Right cardiac atrium (tissue), 5 donors: ENCODE measurements at regions of chr13 and their contacts with region 1.

Region 1: GRCh38 chr13:23554000-23554399 is 16.2 kb upstream of the TNFRSF19 start:
- DNase-seq: no peak
- ATAC-seq: no peak
- H3K4me3 ChIP-seq: no peak overlapping the region
- H3K27ac ChIP-seq: no peak overlapping the region
- H3K4me1 ChIP-seq: peaks cover 8% of the 10 kb centered on the region
- H3K27me3 ChIP-seq: no peaks in the 10 kb centered on the region

Region 2: GRCh38 chr13:23516702-23517101 is 37.3 kb before region 1 on chr13:
- intact Hi-C with region 1: loop called in 1 of 4 experiments (anchors 5 kb)
- DNase-seq: no peak
- ATAC-seq: no peak
- H3K4me3 ChIP-seq: no peak overlapping the region
- H3K27ac ChIP-seq: no peak overlapping the region
- H3K4me1 ChIP-seq: no peaks in the 10 kb centered on the region
- H3K27me3 ChIP-seq: no peaks in the 10 kb centered on the region

Region 3: GRCh38 chr13:23637829-23638228 is 83.8 kb after region 1 on chr13:
- intact Hi-C with region 1: no loop called
- DNase-seq: peak in 2 of 3 donors; percentile 59 to 75
- ATAC-seq: peak in 1 of 2 donors; percentile 42
- H3K4me3 ChIP-seq: no peak overlapping the region
- H3K27ac ChIP-seq: no peak overlapping the region
- H3K4me1 ChIP-seq: peaks cover 6% of the 10 kb centered on the region
- H3K27me3 ChIP-seq: no peaks in the 10 kb centered on the region

Region 4: GRCh38 chr13:23651887-23652286 is 97.9 kb after region 1 on chr13:
- intact Hi-C with region 1: no loop called
- DNase-seq: no peak
- ATAC-seq: no peak
- H3K4me3 ChIP-seq: no peak overlapping the region
- H3K27ac ChIP-seq: no peak overlapping the region
- H3K4me1 ChIP-seq: peaks cover 19% of the 10 kb centered on the region
- H3K27me3 ChIP-seq: no peaks in the 10 kb centered on the region